ENCODE measurements at regions of chr2 and their contacts with region 1.

Region 1: GRCh38 chr2:151261231-151261976 is at the start of gene RBM43:
- DNase-seq: peak; percentile 89
- ATAC-seq: peak; percentile 93
- H3K4me3 Mint-ChIP-seq: peak within 1 kb of the TSS; percentile 89
- H3K27ac Mint-ChIP-seq: peak within 1 kb of the TSS; percentile 98
- H3K4me1 Mint-ChIP-seq: peaks cover 21% of the 10 kb centered on the region
- H3K27me3 Mint-ChIP-seq: no peaks in the 10 kb centered on the region
- CTCF ChIP-seq: no peak
- total RNA-seq, gene RBM43: 3.4 to 3.5 TPM

Region 2: DNA sequence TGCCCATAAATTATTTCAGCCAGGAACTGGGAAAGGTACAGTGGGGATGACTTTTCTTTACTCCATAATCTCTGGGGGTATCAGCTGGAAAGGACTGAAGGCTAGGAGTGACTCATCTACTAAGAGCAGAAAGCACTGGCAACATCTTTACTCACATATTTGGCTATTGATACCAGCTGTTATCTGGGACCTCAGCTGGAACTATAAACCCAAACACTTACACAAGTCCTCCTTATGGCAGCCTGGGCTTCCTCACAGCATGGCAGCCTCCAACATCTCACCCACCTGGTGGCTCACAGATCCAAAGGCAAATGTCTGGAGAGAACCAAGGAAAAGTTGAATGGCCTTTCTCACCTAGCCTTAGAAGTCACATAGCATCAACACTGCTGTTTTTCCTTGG is 395.0 kb before region 1 on chr2:
- CTCF ChIA-PET with region 1: no interaction called
- POLR2A ChIA-PET with region 1: no interaction called
- intact Hi-C with region 1: no loop called
- DNase-seq: no peak
- ATAC-seq: no peak
- H3K4me3 Mint-ChIP-seq: no peak overlapping the region
- H3K27ac Mint-ChIP-seq: no peak overlapping the region
- H3K4me1 Mint-ChIP-seq: no peaks in the 10 kb centered on the region
- H3K27me3 Mint-ChIP-seq: no peaks in the 10 kb centered on the region
- CTCF ChIP-seq: no peak

Region 3: DNA sequence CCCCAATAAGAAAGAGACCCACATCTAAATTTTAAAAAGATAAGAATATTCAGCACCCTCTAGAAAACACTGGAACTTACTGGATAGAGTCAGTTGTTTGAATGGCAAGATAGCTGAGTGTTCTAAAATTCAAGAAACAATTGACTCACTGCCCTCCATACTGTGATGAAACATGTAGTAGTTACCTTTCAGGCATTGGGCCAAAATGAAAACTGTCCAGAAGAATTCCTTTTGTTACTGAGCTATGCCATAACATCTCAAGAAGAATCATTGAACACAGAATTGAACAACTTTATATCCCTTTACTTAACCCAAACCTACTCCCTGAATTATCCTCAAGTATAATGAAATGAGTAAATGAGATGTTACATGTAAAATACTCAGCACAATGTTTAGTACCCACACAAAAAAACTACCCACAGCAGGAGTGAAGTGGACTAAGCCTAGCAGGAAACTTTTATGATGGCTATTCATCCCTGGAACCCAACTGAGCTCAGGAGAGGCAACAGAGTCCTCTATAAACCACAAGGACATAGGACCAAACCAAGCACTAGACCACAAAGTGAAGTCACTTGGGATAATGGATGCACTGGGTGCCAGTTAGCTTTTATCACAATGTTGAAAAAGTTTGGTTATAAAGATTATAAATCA is 32.4 kb before region 1 on chr2:
- CTCF ChIA-PET with region 1: no interaction called
- POLR2A ChIA-PET with region 1: no interaction called
- intact Hi-C with region 1: no loop called
- DNase-seq: no peak
- ATAC-seq: no peak
- H3K4me3 Mint-ChIP-seq: no peak overlapping the region
- H3K27ac Mint-ChIP-seq: no peak overlapping the region
- H3K4me1 Mint-ChIP-seq: no peaks in the 10 kb centered on the region
- H3K27me3 Mint-ChIP-seq: peaks cover 13% of the 10 kb centered on the region
- CTCF ChIP-seq: no peak

Region 4: GRCh38 chr2:151289369-151290088 is 28.1 kb after region 1 on chr2 and contains the start of gene NMI:
- CTCF ChIA-PET with region 1: interaction called, 4 read pairs
- POLR2A ChIA-PET with region 1: interaction called, 15 read pairs
- intact Hi-C with region 1: no loop called
- DNase-seq: peak; percentile 60
- ATAC-seq: peak; percentile 69
- H3K4me3 Mint-ChIP-seq: peak within 1 kb of the TSS; percentile 88
- H3K27ac Mint-ChIP-seq: peak within 1 kb of the TSS; percentile 94
- H3K4me1 Mint-ChIP-seq: peaks cover 34% of the 10 kb centered on the region
- H3K27me3 Mint-ChIP-seq: no peaks in the 10 kb centered on the region
- CTCF ChIP-seq: no peak
- total RNA-seq, gene NMI: 28.4 to 28.5 TPM

Measured in activated CD8-positive, alpha-beta T cell treated with anti-CD3 and anti-CD28 coated beads for 36 hours (primary cell).